HepG2 (cell line): ENCODE measurements at regions of chr15 and their contacts with region 1.

Region 1: DNA sequence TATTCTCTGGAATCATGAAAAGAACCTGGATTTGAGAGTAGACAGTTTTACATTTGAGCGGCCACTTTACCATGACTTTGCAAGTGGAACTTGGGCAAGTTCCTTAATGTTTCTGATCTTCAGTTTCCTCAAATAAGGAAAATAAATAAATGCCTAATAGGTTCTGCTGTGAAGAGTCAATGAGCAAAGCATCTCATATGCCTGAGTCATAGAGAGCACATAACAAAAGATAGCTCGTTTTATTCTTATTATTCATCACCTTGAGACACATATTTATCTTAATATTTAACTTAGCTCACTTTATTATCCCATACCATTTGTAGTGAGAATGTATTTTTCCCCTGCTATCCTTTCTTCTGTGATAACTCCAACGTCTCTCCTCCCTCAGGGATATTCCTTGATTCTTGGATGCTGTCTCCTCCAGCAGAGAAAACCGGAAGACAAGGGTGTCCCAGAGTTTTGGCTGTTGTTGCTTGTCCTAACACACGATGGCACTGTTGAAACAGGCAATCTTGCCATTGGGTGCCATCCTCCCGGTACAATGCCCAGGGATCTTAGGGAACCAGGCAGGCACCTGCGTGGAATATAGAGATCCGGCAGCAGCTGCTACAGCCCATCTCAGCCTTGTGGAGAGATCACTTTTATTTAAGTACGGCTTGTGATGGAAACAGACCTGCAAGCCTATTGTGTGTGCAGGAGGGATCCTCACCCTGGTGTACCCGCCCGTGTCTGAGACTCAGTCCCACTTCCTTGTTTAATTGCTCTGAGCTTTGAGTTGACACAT is 33.3 kb upstream of the VPS33B start:
- DNase-seq: peak; percentile 38
- ATAC-seq: peak; percentile 75
- H3K4me3 ChIP-seq: no peak overlapping the region
- H3K27ac ChIP-seq: no peak overlapping the region
- H3K4me1 ChIP-seq: no peaks in the 10 kb centered on the region
- H3K27me3 ChIP-seq: peaks cover 0 to 13% of the 10 kb centered on the region in 2 experiments; a peak in 2 of 5 replicates
- CTCF ChIP-seq: peak; percentile 86
- EP300 ChIP-seq: no peak
- POLR2A ChIP-seq: no peak
- RAD21 ChIP-seq: peak; percentile 67

Region 2: GRCh38 chr15:90946538-90946937 is 109.2 kb before region 1 on chr15:
- CTCF ChIA-PET with region 1: no interaction called
- POLR2A ChIA-PET with region 1: no interaction called
- in situ Hi-C with region 1: no loop called
- intact Hi-C with region 1: no loop called
- DNase-seq: no peak
- ATAC-seq: no peak
- H3K4me3 ChIP-seq: no peak overlapping the region
- H3K27ac ChIP-seq: no peak overlapping the region
- H3K4me1 ChIP-seq: no peaks in the 10 kb centered on the region
- H3K27me3 ChIP-seq: no peaks in the 10 kb centered on the region
- CTCF ChIP-seq: no peak
- EP300 ChIP-seq: no peak
- POLR2A ChIP-seq: no peak
- RAD21 ChIP-seq: no peak

Region 3: GRCh38 chr15:90994417-90995311 is 61.1 kb before region 1 on chr15 and contains the start of gene PRC1:
- CTCF ChIA-PET with region 1: no interaction called
- POLR2A ChIA-PET with region 1: no interaction called
- in situ Hi-C with region 1: no loop called
- intact Hi-C with region 1: no loop called
- DNase-seq: peak; percentile 95
- ATAC-seq: peak; percentile 97
- H3K4me3 ChIP-seq: peak within 1 kb of the TSS; percentile 96 to 100 (median 99)
- H3K27ac ChIP-seq: peak within 1 kb of the TSS; percentile 93
- H3K4me1 ChIP-seq: peaks cover 25% of the 10 kb centered on the region
- H3K27me3 ChIP-seq: no peaks in the 10 kb centered on the region
- CTCF ChIP-seq: peak; percentile 40
- EP300 ChIP-seq: 0 out of 4 replicates have a peak, but pooled peaks of 1 of the 2 experiments have one; percentile 55
- POLR2A ChIP-seq: peak; percentile 60 to 87
- RAD21 ChIP-seq: no peak
- total RNA-seq, gene PRC1: 162 and 214 TPM in 2 replicates

Region 4: GRCh38 chr15:91032919-91033803 is 22.6 kb before region 1 on chr15:
- CTCF ChIA-PET with region 1: no interaction called
- POLR2A ChIA-PET with region 1: no interaction called
- in situ Hi-C with region 1: no loop called
- intact Hi-C with region 1: no loop called
- DNase-seq: peak; percentile 75
- ATAC-seq: peak; percentile 96
- H3K4me3 ChIP-seq: peak overlapping the region in 1 of 3 experiments; percentile 64; a peak in 2 of 6 replicates
- H3K27ac ChIP-seq: no peak overlapping the region
- H3K4me1 ChIP-seq: no peaks in the 10 kb centered on the region
- H3K27me3 ChIP-seq: peaks cover 2 to 21% of the 10 kb centered on the region in 2 experiments; a peak in 3 of 5 replicates
- CTCF ChIP-seq: peak; percentile 98
- EP300 ChIP-seq: no peak
- POLR2A ChIP-seq: no peak
- RAD21 ChIP-seq: peak; percentile 82

Region 5: GRCh38 chr15:91224755-91225380 is 169.1 kb after region 1 on chr15:
- CTCF ChIA-PET with region 1: interaction called, 22 read pairs
- POLR2A ChIA-PET with region 1: no interaction called
- in situ Hi-C with region 1: loop called (anchors 5 kb)
- intact Hi-C with region 1: loop called (anchors 1 kb)
- DNase-seq: peak; percentile 25
- ATAC-seq: peak; percentile 64
- H3K4me3 ChIP-seq: no peak overlapping the region
- H3K27ac ChIP-seq: no peak overlapping the region
- H3K4me1 ChIP-seq: peaks cover 12% of the 10 kb centered on the region
- H3K27me3 ChIP-seq: no peaks in the 10 kb centered on the region
- CTCF ChIP-seq: peak; percentile 71
- EP300 ChIP-seq: no peak
- POLR2A ChIP-seq: no peak
- RAD21 ChIP-seq: peak; percentile 38; the same call in 1 of the 2 replicates

Region 6: GRCh38 chr15:91271565-91272153 is 215.9 kb after region 1 on chr15:
- CTCF ChIA-PET with region 1: interaction called, 27 read pairs
- POLR2A ChIA-PET with region 1: no interaction called
- in situ Hi-C with region 1: loop called (anchors 5 kb)
- intact Hi-C with region 1: loop called (anchors 1 kb)
- DNase-seq: peak; percentile 35
- ATAC-seq: peak; percentile 52; the same call in 2 of the 3 replicates
- H3K4me3 ChIP-seq: no peak overlapping the region
- H3K27ac ChIP-seq: no peak overlapping the region
- H3K4me1 ChIP-seq: no peaks in the 10 kb centered on the region
- H3K27me3 ChIP-seq: peaks cover 0 to 4% of the 10 kb centered on the region in 2 experiments; a peak in 1 of 5 replicates
- CTCF ChIP-seq: peak; percentile 79
- EP300 ChIP-seq: no peak
- POLR2A ChIP-seq: no peak
- RAD21 ChIP-seq: no peak